Psoas muscle (tissue), 8 donors: ENCODE measurements at regions of chr17 and their contacts with region 1.

Region 1: GRCh38 chr17:1455797-1456599 is at the start of gene CRK:
- DNase-seq: peak; percentile 97 to 99
- ATAC-seq: peak; percentile 86 to 92 (median 90)
- H3K4me3 ChIP-seq: peak within 1 kb of the TSS; percentile 95
- H3K27ac ChIP-seq: peak within 1 kb of the TSS; percentile 95
- H3K4me1 ChIP-seq: peaks cover 45% of the 10 kb centered on the region
- H3K27me3 ChIP-seq: no peaks in the 10 kb centered on the region
- CTCF ChIP-seq: no peak
- total RNA-seq, gene CRK: 26.4 to 60.4 (median 33.1) TPM

Region 2: GRCh38 chr17:1365445-1366039 is 90.5 kb before region 1 on chr17:
- intact Hi-C with region 1: loop called in 1 of 2 experiments (anchors 5 kb)
- DNase-seq: no peak
- ATAC-seq: peak; percentile 69 to 78 (median 76)
- H3K4me3 ChIP-seq: peak overlapping the region; percentile 31
- H3K27ac ChIP-seq: peak overlapping the region; percentile 65
- H3K4me1 ChIP-seq: peaks cover 86% of the 10 kb centered on the region
- H3K27me3 ChIP-seq: no peaks in the 10 kb centered on the region
- CTCF ChIP-seq: peak; percentile 90

Region 3: GRCh38 chr17:1399679-1400512 is 56.1 kb before region 1 on chr17 and contains the start of gene YWHAE:
- intact Hi-C with region 1: loop called (anchors 1 to 10 kb)
- DNase-seq: peak; percentile 99
- ATAC-seq: peak; percentile 94 to 97 (median 96)
- H3K4me3 ChIP-seq: peak within 1 kb of the TSS; percentile 88
- H3K27ac ChIP-seq: peak within 1 kb of the TSS; percentile 93
- H3K4me1 ChIP-seq: peaks cover 30% of the 10 kb centered on the region
- H3K27me3 ChIP-seq: no peaks in the 10 kb centered on the region
- CTCF ChIP-seq: no peak
- total RNA-seq, gene YWHAE: 641 to 874 (median 838) TPM

Region 4: DNA sequence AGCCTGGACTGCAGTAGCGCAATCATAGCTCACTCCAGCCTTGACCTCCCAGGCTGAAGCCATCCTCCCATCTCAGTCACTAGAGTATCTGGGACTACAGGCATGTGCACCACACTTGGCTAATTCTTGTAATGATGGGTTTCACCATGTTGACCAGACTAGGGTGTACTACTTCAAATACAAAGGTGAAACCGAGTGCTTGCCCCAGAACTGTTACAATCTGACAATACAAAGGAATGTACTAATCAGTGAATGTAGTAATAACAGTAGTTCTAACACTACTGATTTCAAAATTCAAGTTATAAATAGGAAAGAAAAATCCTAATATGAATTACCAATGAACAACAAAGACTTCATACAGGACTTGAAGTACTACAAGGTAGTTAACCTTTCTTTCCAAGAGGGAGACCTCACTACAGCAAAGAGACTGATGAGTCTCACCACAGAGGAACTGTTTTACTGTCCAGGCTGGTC is 24.3 kb before region 1 on chr17:
- intact Hi-C with region 1: loop called in 1 of 2 experiments (anchors 1 kb)
- DNase-seq: no peak
- ATAC-seq: peak in 1 of 4 donors; percentile 46
- H3K4me3 ChIP-seq: no peak overlapping the region
- H3K27ac ChIP-seq: no peak overlapping the region
- H3K4me1 ChIP-seq: peaks cover 10% of the 10 kb centered on the region
- H3K27me3 ChIP-seq: no peaks in the 10 kb centered on the region
- CTCF ChIP-seq: no peak

Region 5: GRCh38 chr17:1516388-1517161 is 60.6 kb after region 1 on chr17 and contains the start of gene INPP5K:
- intact Hi-C with region 1: loop called in 1 of 2 experiments (anchors 5 kb)
- DNase-seq: peak; percentile 98 to 99
- ATAC-seq: peak; percentile 94 to 97 (median 96)
- H3K4me3 ChIP-seq: peak within 1 kb of the TSS; percentile 99
- H3K27ac ChIP-seq: peak within 1 kb of the TSS; percentile 96
- H3K4me1 ChIP-seq: peaks cover 56% of the 10 kb centered on the region
- H3K27me3 ChIP-seq: no peaks in the 10 kb centered on the region
- CTCF ChIP-seq: no peak
- total RNA-seq, gene INPP5K: 35.7 to 41.8 (median 40.1) TPM